ENCODE measurements at regions of chr12 and their contacts with region 1.

Region 1: DNA sequence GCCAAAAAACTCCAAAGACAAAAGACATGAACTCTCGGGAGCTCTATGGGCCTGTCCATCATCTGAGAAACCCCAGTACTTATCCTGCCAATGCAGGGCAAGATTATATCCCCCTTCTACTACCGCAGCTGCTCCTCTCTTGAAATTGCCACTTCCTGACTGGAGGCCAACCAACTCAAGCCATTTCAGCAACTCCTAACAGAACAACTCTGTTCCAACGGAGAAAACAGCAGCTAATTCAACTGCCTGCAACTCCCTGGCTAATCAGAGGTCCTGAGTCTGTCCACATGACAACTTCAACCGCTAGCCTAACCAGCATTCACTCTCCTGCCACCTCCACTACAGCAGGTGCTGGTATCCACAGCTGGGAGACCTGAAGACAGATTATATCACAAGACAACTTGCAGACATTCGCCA is 24.1 kb downstream of the CEP83 start:
- ATAC-seq: peak in 2 of 8 experiments; percentile 25 to 65
- H3K4me3 ChIP-seq: no peak overlapping the region
- H3K27ac ChIP-seq: no peak overlapping the region
- H3K4me1 ChIP-seq: no peaks in the 10 kb centered on the region

Region 2: DNA sequence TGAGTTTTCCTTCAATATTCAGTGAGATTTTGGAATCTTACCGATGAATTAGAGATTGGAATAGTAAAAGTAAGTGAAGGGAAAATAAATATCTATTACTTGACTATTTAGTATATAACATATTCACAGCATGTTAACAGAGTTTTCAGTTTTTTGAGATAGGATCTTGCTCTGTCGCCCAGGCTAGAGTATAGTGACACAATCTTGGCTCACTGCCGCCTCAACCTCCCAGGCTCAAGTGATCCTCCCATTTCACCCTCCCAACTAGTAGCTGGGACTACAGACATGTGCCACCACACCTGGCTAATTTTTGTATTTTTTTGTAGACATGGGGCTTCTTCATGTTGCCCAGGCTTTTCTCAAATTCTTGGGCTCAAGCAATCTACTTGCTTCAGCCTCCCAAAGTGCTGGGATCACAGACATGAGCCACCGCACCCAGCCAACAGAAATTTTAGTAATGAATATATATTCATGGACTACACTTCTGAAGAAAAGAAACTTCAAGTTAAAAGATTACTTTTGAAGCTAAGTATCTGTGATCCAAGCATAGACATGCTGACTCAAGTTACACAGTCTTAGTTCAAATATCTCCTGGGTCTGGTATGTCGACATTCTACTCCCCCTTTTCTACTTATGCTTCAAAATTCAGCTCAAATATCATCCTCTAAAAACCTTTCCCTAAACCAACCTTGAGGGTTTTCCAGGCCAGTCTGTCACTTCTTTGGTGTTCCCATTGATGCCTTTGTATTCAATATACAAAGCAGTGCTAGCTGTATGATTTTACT is 1007.5 kb before region 1 on chr12:
- in situ Hi-C with region 1: no loop called
- ATAC-seq: no peak
- H3K4me3 ChIP-seq: no peak overlapping the region
- H3K27ac ChIP-seq: no peak overlapping the region
- H3K4me1 ChIP-seq: peaks cover 0 to 10% of the 10 kb centered on the region in 2 donors

Region 3: DNA sequence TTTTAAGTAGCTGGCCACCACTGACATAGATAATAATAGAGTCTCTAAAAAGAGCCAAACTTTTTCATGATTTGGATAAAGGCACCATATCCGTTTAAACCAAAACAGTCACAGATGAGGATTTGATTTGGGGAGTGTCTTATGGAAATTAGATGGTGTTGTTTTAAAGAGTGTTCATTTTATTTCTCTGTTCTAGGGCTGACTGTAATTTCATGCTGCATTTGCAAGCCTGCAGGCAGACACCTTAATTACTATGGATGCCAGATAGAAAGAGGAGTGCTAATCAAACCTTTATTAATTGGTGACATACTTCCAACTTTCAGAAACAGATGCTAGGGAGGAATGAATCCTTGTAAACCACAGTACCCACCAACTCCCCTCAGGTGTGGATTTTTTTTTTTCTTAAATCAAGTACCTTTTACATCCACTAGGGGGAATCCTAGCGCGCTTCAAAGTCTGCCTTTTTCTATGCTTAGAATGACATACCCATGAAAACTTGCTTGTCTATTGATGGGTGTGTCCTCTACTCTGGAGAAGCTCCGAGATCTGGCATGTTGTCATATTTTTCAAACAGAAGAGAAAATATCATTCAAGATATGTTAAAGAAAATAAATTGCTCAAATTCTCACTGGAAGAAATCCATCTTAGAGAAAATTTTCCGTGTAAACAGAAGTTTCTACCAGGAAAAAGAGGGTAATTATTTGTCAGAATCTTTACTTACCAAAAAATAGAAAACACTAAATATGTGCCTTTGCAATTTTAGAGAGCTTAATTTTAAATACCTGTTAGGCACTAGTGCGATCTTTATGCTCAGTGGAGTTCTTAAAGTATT is 301.3 kb before region 1 on chr12:
- in situ Hi-C with region 1: loop called in 1 of 9 experiments (anchors 10 kb)
- ATAC-seq: peak; percentile 44 to 88 (median 60)
- H3K4me3 ChIP-seq: no peak overlapping the region
- H3K27ac ChIP-seq: no peak overlapping the region
- H3K4me1 ChIP-seq: no peaks in the 10 kb centered on the region

Region 4: GRCh38 chr12:94149119-94149780 is 286.3 kb before region 1 on chr12:
- in situ Hi-C with region 1: no loop called
- ATAC-seq: peak; percentile 29 to 58 (median 42)
- H3K4me3 ChIP-seq: peak overlapping the region; percentile 53 to 81 (median 61)
- H3K27ac ChIP-seq: peak overlapping the region; percentile 84 to 86
- H3K4me1 ChIP-seq: peaks cover 35 to 45% of the 10 kb centered on the region in 2 donors

Region 5: DNA sequence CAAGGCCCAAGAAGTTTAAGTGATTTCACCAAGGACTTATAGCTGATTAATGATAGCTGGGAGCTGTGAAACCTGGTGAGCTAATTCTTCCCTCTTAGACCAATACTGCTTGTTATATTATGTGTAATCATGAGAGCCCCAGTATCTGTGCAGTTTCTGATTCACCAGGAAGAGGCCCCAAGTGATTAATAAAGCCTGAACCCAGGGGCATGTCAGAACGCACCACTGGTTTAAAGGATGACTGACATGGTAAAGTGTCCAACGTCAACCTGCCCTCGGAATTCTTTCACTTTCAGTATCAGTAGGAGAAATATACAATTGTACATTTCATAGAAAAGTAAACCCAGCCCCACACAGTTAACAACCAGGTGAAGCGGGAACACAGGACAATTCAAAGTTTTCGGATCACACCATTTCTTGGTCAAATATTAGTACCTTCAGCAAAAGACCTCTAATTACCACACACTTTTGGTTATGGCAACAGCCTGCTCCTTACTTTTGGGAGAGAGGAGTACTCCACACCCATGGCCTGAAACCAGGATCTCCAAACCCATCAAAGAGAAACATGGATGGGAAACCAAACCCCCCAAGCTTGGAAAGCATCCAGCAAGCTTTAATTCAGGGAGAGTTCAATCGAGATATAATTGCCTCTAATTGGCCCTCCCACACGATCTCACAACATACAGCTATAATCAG is 186.3 kb after region 1 on chr12:
- in situ Hi-C with region 1: no loop called
- ATAC-seq: peak in 7 of 8 experiments; percentile 16 to 68 (median 56)
- H3K4me3 ChIP-seq: no peak overlapping the region
- H3K27ac ChIP-seq: no peak overlapping the region
- H3K4me1 ChIP-seq: peaks cover 23 to 40% of the 10 kb centered on the region in 2 donors

Measured in motor neuron (in vitro differentiated cells).